Endothelial cell of umbilical vein (primary cell): ENCODE measurements at regions of chr13 and their contacts with region 1.

Region 1: DNA sequence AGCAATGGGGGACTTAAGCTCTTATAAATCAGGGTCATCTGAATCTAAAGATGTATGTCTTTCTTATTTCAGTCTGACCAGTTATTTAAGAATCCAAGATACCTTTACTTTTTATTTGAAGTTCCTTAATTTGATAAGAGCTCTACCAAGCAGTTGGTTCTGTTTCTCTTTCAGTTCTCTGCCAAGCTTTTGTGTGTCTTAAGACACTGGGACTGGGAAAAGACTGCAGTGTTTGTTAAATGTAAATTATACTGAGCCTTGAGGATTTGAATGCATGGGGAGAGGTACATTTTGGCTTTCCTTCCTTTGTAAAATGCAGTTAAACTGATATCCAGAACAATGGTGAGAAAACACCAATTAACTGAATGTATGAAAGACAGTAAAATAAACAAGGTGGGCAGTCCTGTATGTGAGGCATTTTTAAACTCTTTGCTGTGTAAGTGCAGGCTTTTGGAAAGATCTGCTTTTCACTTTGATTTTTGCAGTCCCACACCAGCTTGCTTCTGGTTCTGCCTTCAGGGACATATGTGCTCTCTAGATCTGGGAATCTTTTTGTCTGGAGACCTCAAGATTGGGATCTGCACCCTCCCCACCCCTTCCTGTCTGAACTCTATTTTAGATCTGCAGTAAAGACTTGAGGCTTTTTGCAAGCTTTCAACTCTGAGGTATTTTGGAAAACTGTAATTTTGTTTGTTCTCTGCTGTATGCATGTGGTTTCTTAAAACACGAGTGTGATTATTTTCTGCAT is 77.6 kb downstream of the LRCH1 start:
- DNase-seq: peak; percentile 34
- H3K4me3 ChIP-seq: no peak overlapping the region
- H3K27ac ChIP-seq: no peak overlapping the region
- H3K4me1 ChIP-seq: no peaks in the 10 kb centered on the region
- H3K27me3 ChIP-seq: no peaks in the 10 kb centered on the region
- CTCF ChIP-seq: no peak
- POLR2A ChIP-seq: no peak

Region 2: DNA sequence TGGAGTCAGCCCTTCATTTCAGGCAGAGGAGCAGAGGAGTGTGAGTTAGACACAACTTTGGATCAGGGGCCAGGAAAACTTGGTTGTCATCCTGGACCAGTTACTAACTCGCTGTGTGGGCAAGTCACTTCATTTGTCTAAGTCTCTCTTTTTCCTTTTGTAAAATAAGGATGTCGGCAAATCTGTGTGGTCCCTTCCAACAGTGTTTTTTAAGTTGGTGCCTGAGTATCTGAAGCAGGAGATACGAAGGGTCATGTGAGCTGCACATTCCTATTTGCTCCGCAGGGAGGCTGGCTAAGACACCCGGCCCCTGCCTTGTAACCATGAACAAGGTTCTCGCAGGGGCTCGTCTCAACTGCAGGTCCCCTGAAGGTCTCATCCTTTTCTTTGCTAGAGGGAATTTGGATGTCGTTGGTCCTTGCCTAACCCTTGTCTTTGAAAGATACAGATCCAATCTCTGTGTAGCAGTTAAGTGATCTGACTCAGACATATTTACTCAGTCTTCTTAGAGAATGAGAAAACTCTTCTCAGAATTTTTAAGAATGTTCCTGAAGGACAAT is 13.3 kb before region 1 on chr13:
- CTCF ChIA-PET with region 1: interaction called, 5 read pairs
- POLR2A ChIA-PET with region 1: no interaction called
- dilution Hi-C with region 1: no loop called
- intact Hi-C with region 1: loop called (anchors 1 kb)
- DNase-seq: no peak
- H3K4me3 ChIP-seq: no peak overlapping the region
- H3K27ac ChIP-seq: no peak overlapping the region
- H3K4me1 ChIP-seq: peaks cover 16% of the 10 kb centered on the region
- H3K27me3 ChIP-seq: no peaks in the 10 kb centered on the region
- CTCF ChIP-seq: no peak
- POLR2A ChIP-seq: no peak